Activated CD4-positive, alpha-beta T cell treated with anti-CD3 and anti-CD28 coated beads for 36 hours (primary cell): ENCODE measurements at regions of chr7 and their contacts with region 1.

Region 1: GRCh38 chr7:77536413-77537135 is 521 bp upstream of the PTPN12 start:
- DNase-seq: peak; percentile 99
- ATAC-seq: peak; percentile 96
- H3K4me3 Mint-ChIP-seq: peak overlapping the region; percentile 95
- H3K27ac Mint-ChIP-seq: peak overlapping the region; percentile 91
- H3K4me1 Mint-ChIP-seq: peaks cover 9% of the 10 kb centered on the region
- H3K27me3 Mint-ChIP-seq: no peaks in the 10 kb centered on the region

Region 2: DNA sequence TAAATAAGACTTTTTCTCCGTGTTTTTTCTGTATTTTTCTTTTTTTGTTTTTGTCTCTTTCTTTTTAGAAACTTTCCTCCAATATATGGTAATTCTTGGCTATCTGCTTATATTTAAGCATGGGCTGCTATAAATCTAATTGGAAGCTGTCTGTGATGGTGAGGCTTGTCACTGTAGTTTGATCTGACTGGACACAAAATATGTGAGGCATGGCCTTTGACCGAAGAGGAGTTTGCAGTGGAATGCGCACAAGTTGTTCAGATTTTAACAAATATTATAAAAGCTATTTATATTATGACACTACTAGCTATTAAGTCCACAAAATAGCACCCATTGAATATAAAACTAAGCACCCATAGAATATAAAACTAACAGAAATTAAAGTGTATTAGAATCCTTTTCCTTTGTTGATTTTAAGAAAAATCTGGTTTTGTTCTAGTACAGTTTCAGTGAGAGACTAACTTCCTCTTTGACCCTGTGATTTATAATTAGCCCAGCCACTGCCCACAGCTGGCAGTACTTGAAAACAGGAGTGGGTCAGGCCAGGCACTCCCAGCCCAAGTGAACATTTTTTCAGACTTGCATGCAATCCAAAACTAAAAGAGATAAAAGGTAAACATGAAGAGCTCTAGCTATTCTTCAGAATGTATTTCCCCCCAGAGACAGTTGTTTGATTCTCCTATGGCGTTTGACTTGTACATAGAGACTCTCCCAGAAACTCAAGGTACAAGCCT is 267.0 kb before region 1 on chr7:
- CTCF ChIA-PET with region 1: no interaction called
- POLR2A ChIA-PET with region 1: no interaction called
- intact Hi-C with region 1: loop called in 1 of 2 experiments (anchors 5 kb)
- DNase-seq: no peak
- ATAC-seq: no peak
- H3K4me3 Mint-ChIP-seq: no peak overlapping the region
- H3K27ac Mint-ChIP-seq: no peak overlapping the region
- H3K4me1 Mint-ChIP-seq: peaks cover 13% of the 10 kb centered on the region
- H3K27me3 Mint-ChIP-seq: no peaks in the 10 kb centered on the region

Region 3: DNA sequence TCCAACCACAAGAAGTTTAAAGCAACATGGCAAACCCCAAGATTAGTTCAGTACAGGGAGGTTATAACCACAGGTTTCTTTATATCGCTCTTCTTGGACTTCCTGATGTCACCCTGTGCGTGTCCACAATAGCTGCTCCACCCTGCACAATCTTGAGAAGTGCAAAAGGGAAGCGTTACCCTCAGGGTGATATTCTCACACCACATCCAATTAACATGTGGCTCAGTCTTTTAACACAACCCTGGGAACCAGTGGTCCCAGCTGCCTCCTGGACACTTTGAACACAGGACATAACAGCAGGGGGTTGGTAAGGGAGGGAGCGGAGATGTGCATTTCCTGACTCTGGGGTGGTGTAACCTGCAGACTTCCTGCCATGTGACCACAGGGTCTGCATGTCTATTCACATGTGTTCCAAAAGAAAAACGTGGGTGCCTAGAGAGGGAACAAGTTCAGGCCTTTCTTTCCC is 185.0 kb before region 1 on chr7:
- CTCF ChIA-PET with region 1: no interaction called
- POLR2A ChIA-PET with region 1: no interaction called
- intact Hi-C with region 1: loop called (anchors 2 to 5 kb)
- DNase-seq: peak; percentile 55
- ATAC-seq: peak; percentile 83
- H3K4me3 Mint-ChIP-seq: peak overlapping the region; percentile 53
- H3K27ac Mint-ChIP-seq: peak overlapping the region; percentile 87
- H3K4me1 Mint-ChIP-seq: peaks cover 56% of the 10 kb centered on the region
- H3K27me3 Mint-ChIP-seq: no peaks in the 10 kb centered on the region

Region 4: DNA sequence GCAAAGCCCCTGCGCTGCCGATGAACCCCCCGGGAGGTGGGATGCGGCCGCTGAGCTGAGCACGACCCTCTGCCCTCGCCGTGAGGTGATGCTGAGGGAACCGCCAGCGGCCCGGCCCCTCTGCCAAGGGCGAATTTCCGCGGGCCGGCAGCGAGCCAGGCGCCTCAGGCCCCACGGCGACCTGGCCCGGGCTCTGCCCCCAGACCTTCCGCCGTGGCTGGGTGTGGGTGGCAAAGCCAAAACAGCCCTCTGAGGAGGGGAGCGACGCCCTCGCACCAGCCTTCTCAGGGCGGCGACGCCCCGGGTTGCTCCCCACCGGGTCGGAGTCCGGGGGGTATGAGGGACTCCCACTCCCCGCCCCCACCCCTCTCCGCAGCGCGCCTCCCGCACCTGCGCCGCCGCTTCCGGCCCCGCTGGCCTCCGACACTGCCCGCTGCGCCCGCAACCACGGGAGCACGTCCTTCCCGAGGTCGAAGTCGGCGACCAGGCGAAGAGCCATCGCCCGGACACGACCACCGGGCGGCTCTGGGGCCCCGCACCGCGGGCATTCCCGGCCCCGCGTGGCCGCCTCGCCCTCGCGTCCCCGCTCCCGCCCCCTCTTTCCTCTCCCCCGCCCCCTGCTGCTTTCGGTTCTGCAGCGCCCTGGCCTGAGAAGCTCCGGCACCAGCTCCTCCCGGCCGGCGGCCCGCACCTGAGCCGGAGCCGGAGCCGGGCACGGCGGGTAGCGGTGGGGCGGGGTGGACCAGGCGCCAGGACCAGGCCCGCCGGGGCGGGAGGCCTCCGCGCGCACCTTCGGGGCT is 120.6 kb before region 1 on chr7 and contains the start of gene GSAP:
- CTCF ChIA-PET with region 1: no interaction called
- POLR2A ChIA-PET with region 1: no interaction called
- intact Hi-C with region 1: loop called (anchors 2 to 5 kb)
- DNase-seq: peak; percentile 62
- ATAC-seq: peak; percentile 46
- H3K4me3 Mint-ChIP-seq: peak within 1 kb of the TSS; percentile 52
- H3K27ac Mint-ChIP-seq: peak within 1 kb of the TSS; percentile 25
- H3K4me1 Mint-ChIP-seq: peaks cover 41% of the 10 kb centered on the region
- H3K27me3 Mint-ChIP-seq: peaks cover 10% of the 10 kb centered on the region
- total RNA-seq, gene GSAP: 1.1 to 1.4 TPM

Region 5: DNA sequence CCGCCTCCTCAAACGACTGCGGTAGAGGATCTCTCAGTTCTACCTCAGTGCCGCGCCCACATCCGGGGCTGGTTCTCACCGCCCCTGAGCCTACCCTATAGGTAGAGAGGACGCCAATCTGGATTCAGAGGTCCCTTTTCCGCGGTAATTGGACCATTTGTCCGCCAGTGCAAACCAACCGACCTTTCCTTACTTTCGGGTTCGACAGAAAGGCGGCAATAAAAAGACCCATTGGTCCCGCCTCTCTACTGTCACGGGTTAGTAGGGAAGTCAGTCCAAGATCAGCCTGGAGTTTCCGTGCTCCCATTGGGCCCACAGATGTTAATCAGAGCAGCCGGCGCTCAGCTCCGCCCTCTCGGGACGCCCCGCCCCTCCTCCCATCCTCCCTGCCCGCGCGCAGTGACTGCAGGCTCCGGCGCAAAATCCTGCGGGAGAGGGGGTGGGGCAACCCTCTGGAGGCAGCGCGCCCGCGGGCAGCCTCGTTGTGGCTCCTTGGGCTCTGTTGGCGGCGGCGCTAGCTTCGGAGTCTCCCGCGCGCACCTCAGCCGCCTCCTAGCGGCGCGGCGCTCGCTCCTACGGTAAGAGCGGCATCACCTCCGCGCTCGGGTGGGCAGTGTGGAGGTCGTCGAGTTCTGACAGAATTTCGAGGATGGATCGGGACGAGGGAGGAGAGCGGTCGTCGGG is 262.0 kb after region 1 on chr7 and contains the starts of genes PHTF2 and TMEM60:
- CTCF ChIA-PET with region 1: no interaction called
- POLR2A ChIA-PET with region 1: no interaction called
- intact Hi-C with region 1: loop called (anchors 1 to 2 kb)
- DNase-seq: peak; percentile 96
- ATAC-seq: peak; percentile 93
- H3K4me3 Mint-ChIP-seq: peak within 1 kb of the TSS; percentile 83
- H3K27ac Mint-ChIP-seq: peak within 1 kb of the TSS; percentile 94
- H3K4me1 Mint-ChIP-seq: peaks cover 68% of the 10 kb centered on the region
- H3K27me3 Mint-ChIP-seq: no peaks in the 10 kb centered on the region
- total RNA-seq, gene PHTF2: 25.5 to 26.7 TPM
- total RNA-seq, gene TMEM60: 7.9 to 10.1 TPM